Tibial artery (tissue), 4 donors: ENCODE measurements at regions of chr19 and their contacts with region 1.

Region 1: GRCh38 chr19:30686176-30686820 is 314.1 kb downstream of the ZNF536 start:
- DNase-seq: no peak
- H3K4me3 ChIP-seq: no peak overlapping the region
- H3K27ac ChIP-seq: no peak overlapping the region
- H3K4me1 ChIP-seq: peaks cover 0 to 4% (median 0%) of the 10 kb centered on the region in 4 donors
- H3K27me3 ChIP-seq: peaks cover 0 to 69% of the 10 kb centered on the region in 2 donors
- CTCF ChIP-seq: no peak

Region 2: DNA sequence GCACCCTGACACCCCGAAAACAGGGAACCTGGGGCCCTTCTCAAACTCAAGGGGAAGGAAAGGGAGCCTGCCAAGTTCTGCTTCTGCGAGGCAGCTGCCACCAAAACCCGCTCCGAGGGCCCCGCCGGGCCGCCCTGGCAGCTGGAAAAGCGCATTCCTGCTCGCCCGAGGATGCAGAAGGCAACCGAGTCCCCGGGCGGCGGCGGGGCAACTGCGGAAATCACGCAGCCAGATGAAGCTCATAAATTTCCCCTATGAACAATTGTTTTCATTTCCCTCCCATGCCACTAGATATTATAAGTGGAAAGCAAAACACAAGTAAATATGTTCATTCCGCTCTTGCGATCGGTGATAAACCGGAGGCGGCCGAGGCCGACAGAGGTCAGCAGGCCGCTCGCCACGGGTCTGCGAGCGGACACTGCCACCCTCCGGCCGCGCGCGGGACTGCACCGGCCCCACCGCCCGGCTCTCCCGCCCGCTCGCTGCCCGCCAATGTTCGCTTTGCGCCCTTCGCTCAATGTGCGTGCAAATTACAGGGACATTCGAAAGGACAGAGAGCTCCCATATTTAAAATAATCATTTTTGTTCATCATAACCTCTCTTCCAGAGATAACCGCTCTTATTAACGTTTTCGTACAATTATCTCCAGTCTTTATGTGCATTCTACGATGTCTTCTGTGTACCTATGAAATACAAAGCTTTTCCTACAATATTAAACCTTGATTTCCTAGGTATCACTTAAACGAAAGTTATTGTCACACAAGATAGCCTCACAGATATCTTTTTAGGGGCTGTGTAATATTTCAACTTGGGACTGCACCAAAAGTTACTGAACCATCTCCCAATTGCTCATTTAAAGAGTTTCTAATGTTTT is 1538.3 kb after region 1 on chr19:
- intact Hi-C with region 1: loop called (anchors 5 kb)
- DNase-seq: no peak
- H3K4me3 ChIP-seq: peak overlapping the region in 1 of 2 donors; percentile 23
- H3K27ac ChIP-seq: no peak overlapping the region
- H3K4me1 ChIP-seq: peaks cover 0 to 9% (median 3%) of the 10 kb centered on the region in 4 donors
- H3K27me3 ChIP-seq: peaks cover 0 to 44% of the 10 kb centered on the region in 2 donors
- CTCF ChIP-seq: peak; percentile 84 to 99